Thyroid gland (tissue), 4 donors: ENCODE measurements at regions of chr1 and their contacts with region 1.

Region 1: DNA sequence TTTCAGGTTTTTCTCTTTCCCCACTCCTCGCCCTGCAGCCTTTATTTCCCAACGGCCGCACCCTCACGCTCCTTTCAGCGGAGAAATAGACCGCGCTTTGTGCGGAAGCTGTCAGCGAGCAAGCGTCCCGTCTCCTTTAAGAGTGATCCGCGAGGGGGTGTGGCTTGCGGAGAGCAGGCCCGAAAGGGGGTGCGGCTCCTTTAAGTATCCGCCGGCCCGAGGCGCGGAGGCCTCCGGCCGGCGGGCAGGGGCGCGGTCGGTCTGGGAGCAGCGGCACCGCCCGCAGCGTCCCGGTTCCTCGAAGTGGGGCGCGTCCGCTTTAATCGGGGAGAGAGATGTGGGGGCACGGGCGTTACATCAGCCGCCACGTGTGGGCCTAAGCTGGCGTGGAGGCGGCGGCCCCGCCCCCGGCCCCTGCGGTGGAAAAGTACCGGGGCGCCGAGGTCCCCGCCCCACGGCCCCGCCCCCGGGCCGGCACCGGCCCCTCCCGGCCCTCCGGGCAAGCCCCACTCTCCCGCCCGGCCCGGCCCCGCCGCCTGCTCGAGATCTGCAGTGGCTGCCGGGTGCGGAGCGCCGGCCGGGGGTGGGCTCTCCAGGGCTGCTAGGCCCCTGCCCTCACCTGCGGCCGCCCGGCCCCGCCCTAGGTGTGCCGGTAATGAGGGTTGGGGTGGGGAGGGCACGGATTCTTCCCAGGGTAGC is 1.2 kb downstream of the SLC6A9 start:
- DNase-seq: peak; percentile 93
- H3K4me3 ChIP-seq: peak overlapping the region; percentile 48 to 66 (median 57)
- H3K27ac ChIP-seq: peak overlapping the region; percentile 44 to 92 (median 85)
- H3K4me1 ChIP-seq: peaks cover 12% of the 10 kb centered on the region in 2 donors
- H3K27me3 ChIP-seq: no peaks in the 10 kb centered on the region
- CTCF ChIP-seq: no peak
- POLR2A ChIP-seq: peak in 1 of 2 donors; percentile 55

Region 2: GRCh38 chr1:43763497-43763973 is 266.5 kb before region 1 on chr1:
- intact Hi-C with region 1: loop called (anchors 10 kb)
- DNase-seq: peak; percentile 77 to 80
- H3K4me3 ChIP-seq: no peak overlapping the region
- H3K27ac ChIP-seq: no peak overlapping the region
- H3K4me1 ChIP-seq: peaks cover 15 to 24% of the 10 kb centered on the region in 2 donors
- H3K27me3 ChIP-seq: no peaks in the 10 kb centered on the region
- CTCF ChIP-seq: peak; percentile 57 to 96 (median 88)
- POLR2A ChIP-seq: no peak

Region 3: GRCh38 chr1:43994897-43995335 is 35.1 kb before region 1 on chr1:
- intact Hi-C with region 1: loop called (anchors 5 kb)
- DNase-seq: no peak
- H3K4me3 ChIP-seq: no peak overlapping the region
- H3K27ac ChIP-seq: no peak overlapping the region
- H3K4me1 ChIP-seq: peaks cover 15 to 17% of the 10 kb centered on the region in 2 donors
- H3K27me3 ChIP-seq: no peaks in the 10 kb centered on the region
- CTCF ChIP-seq: peak in 1 of 6 experiments; percentile 15
- POLR2A ChIP-seq: no peak

Region 4: DNA sequence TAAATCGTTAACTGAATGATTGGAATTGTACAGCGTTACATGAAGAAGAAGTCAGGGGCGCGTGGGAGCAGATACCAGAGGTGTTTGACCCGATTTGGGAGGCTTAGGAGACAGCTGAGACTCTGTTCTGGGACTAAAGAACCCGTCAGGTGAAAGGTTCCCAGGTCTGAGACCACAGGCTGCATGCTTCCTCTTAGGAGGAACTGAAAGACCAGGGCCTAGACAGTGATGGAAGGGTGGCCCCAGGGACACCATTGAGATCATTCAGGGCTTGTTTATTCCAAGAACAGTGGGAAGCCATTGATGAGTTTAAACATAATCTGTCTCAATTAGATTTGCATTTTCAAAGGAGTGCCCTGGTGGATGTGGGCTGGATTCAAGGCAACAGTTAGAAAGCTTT is 89.5 kb after region 1 on chr1:
- intact Hi-C with region 1: no loop called
- DNase-seq: no peak
- H3K4me3 ChIP-seq: no peak overlapping the region
- H3K27ac ChIP-seq: no peak overlapping the region
- H3K4me1 ChIP-seq: no peaks in the 10 kb centered on the region
- H3K27me3 ChIP-seq: no peaks in the 10 kb centered on the region
- CTCF ChIP-seq: no peak
- POLR2A ChIP-seq: no peak